GM12878 (cell line): ENCODE measurements at regions of chr2 and their contacts with region 1.

Region 1: DNA sequence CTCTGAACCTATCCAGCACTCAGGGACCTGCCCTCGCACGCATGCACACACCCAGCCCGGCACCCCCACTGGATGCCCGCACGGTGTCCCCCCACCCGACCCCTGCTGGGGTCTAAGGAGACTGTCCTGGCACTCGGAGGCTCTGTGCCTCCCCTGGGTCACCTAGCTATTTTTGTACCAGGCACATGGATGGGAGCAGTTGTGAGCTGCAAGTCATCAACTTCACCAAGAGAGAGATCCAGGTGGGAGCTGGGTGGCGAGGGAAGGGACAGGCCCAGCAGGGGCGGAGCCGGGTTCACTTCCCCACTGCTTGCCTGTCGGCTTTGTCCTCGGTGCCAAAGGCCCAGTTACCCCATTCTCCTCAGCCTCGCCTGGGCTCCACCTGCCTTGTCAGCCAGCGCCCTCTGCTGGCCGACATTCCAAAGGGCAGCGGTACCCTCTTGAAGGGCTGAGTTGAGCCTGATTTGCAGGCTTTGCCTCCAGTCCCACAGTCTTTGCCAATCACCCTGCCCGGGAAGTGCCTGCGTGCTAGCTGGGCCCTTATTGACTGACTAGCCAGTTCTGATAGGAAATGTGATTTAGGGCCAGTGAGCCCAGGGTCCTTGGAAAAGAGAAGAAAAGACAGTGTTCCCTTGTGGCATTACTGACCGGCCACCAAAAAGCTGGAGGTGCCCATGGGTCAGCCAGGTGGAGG is 5.8 kb downstream of the NT5DC4 start:
- DNase-seq: peak; percentile 61
- ATAC-seq: peak; percentile 86
- H3K4me3 ChIP-seq: no peak overlapping the region
- H3K27ac ChIP-seq: peak overlapping the region; percentile 39; the same call in 1 of the 2 replicates
- H3K4me1 ChIP-seq: peaks cover 22% of the 10 kb centered on the region
- H3K27me3 ChIP-seq: no peaks in the 10 kb centered on the region
- CTCF ChIP-seq: peak; percentile 98 to 99 (median 99); a peak in 5 of 6 replicates
- EP300 ChIP-seq: no peak; a peak in 1 of 4 replicates
- POLR2A ChIP-seq: no peak
- RAD21 ChIP-seq: peak; percentile 100

Region 2: GRCh38 chr2:112597537-112598322 is 128.9 kb before region 1 on chr2:
- CTCF ChIA-PET with region 1: interaction called, 286 read pairs
- POLR2A ChIA-PET with region 1: interaction called, 3 read pairs
- RAD21 ChIA-PET with region 1: interaction called, 132 read pairs
- SMC1A ChIA-PET with region 1: interaction called, 122 read pairs
- in situ Hi-C with region 1: loop called (anchors 5 kb)
- intact Hi-C with region 1: loop called (anchors 1 kb)
- DNase-seq: no peak
- ATAC-seq: no peak
- H3K4me3 ChIP-seq: no peak overlapping the region
- H3K27ac ChIP-seq: no peak overlapping the region
- H3K4me1 ChIP-seq: no peaks in the 10 kb centered on the region; the same call in 1 of the 2 replicates
- H3K27me3 ChIP-seq: no peaks in the 10 kb centered on the region
- CTCF ChIP-seq: no peak
- EP300 ChIP-seq: no peak
- POLR2A ChIP-seq: no peak
- RAD21 ChIP-seq: no peak

Region 3: GRCh38 chr2:112645310-112646101 is 81.1 kb before region 1 on chr2 and contains the start of gene SLC20A1:
- CTCF ChIA-PET with region 1: interaction called, 70 read pairs
- POLR2A ChIA-PET with region 1: interaction called, 9 read pairs
- RAD21 ChIA-PET with region 1: interaction called, 117 read pairs
- SMC1A ChIA-PET with region 1: interaction called, 24 read pairs
- in situ Hi-C with region 1: no loop called
- intact Hi-C with region 1: loop called (anchors 1 kb)
- DNase-seq: peak; percentile 74
- ATAC-seq: peak; percentile 94
- H3K4me3 ChIP-seq: peak within 1 kb of the TSS; percentile 89
- H3K27ac ChIP-seq: peak within 1 kb of the TSS; percentile 87
- H3K4me1 ChIP-seq: peaks cover 6% of the 10 kb centered on the region
- H3K27me3 ChIP-seq: peaks cover 0 to 2% of the 10 kb centered on the region in 2 experiments; a peak in 1 of 4 replicates
- CTCF ChIP-seq: peak; percentile 42 to 62 (median 52)
- EP300 ChIP-seq: 0 out of 4 replicates have a peak, but pooled peaks of 1 of the 2 experiments have one; percentile 32
- POLR2A ChIP-seq: peak; percentile 99
- RAD21 ChIP-seq: peak; percentile 54
- polyA plus RNA-seq, gene SLC20A1: 21.2 to 22.6 TPM

Region 4: DNA sequence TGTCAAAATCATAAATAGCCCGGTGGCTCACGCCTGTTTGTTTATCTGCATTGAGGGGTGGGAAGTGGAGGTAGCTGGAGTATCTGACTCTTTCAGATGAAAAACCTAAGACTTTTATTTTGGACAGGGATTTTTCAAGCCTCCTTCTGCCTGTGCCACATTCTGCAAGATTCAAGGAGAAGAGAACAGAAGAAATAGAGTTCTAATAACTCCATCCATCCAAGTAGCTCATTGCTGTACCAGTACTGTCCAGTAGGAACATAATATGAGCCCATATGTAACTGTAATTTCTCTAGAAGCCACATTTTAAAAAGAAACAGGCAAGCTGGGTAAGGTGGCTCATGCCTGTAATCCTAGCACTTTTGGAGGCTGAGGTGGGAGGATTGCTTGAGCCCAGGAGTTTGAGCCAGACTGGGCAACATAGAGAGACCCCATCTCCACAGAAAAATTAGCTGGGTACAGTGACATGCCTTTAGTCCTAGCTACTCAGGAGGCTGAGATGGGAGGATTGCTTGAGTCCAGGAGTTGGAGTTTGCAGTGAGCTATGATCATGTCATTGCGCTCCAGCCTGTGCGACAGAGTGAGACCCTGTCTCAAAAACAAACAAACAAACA is 41.3 kb before region 1 on chr2:
- CTCF ChIA-PET with region 1: interaction called, 209 read pairs
- POLR2A ChIA-PET with region 1: interaction called, 40 read pairs
- RAD21 ChIA-PET with region 1: interaction called, 140 read pairs
- SMC1A ChIA-PET with region 1: interaction called, 84 read pairs
- in situ Hi-C with region 1: no loop called
- intact Hi-C with region 1: no loop called
- DNase-seq: no peak
- ATAC-seq: peak; percentile 73
- H3K4me3 ChIP-seq: no peak overlapping the region
- H3K27ac ChIP-seq: no peak overlapping the region
- H3K4me1 ChIP-seq: peaks cover 13% of the 10 kb centered on the region
- H3K27me3 ChIP-seq: no peaks in the 10 kb centered on the region
- CTCF ChIP-seq: peak in 2 of 3 experiments; percentile 4 to 11; a peak in 1 of 6 replicates
- EP300 ChIP-seq: no peak
- POLR2A ChIP-seq: no peak
- RAD21 ChIP-seq: no peak

Region 5: DNA sequence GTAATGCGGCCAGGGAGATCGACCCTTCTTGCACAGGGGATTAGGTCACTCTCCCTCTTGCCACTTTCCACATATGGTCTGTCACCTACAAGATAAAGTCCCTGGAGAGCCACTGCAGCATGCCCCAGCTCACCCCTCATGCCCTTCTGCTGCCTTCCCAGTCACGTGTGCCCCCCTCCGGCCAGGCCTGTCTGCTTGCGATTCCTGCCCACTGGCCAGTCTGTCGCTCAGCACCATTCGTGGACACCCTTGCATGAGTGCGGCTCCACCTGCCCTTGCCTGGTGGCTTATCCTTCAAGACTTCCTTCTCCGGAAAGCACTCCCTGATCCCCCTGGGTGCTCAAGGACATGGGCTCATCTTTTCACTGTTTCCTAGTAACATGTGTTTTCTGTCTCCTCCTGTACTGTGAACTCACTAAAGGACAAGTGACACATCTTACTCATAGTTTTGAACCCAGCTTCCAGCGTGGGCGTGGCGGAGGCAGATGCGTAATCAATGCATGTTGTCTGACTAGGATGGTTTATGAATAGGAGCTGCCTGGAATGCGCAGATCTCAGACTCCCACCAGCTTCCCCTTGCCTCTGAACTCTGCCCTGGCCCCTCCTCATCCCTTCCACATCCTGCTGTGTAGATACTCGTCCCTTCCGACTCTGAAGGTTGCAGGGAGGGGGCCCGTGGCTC is 13.6 kb before region 1 on chr2:
- CTCF ChIA-PET with region 1: interaction called, 102 read pairs
- POLR2A ChIA-PET with region 1: interaction called, 51 read pairs
- RAD21 ChIA-PET with region 1: interaction called, 143 read pairs
- SMC1A ChIA-PET with region 1: interaction called, 107 read pairs
- in situ Hi-C with region 1: no loop called
- intact Hi-C with region 1: no loop called
- DNase-seq: no peak
- ATAC-seq: no peak
- H3K4me3 ChIP-seq: no peak overlapping the region
- H3K27ac ChIP-seq: no peak overlapping the region
- H3K4me1 ChIP-seq: peaks cover 20% of the 10 kb centered on the region
- H3K27me3 ChIP-seq: no peaks in the 10 kb centered on the region
- CTCF ChIP-seq: no peak
- EP300 ChIP-seq: no peak
- POLR2A ChIP-seq: no peak
- RAD21 ChIP-seq: no peak

Region 6: DNA sequence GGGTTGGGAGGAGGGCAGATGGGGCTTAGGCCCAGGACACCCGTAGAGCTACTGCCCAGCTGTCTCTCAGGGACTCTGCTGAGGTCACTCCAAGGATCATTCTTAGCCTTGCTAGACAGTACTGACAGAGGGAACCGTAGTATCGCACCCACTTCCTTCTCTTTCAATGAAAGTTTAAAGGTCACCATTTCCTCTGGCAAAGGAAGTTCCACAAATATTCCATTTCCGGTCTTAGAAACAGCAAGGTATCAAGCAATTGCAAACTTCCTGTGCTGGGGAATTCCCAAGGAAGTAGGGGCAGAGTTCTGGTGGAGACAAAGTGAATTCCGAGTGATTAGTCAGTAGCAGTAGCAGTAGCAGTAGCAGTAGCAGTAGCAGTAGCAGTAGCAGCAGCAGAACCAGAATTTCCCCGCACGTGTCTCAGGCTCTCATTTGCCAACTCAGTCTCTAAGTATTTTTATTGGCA is 85.2 kb after region 1 on chr2:
- CTCF ChIA-PET with region 1: no interaction called
- POLR2A ChIA-PET with region 1: no interaction called
- RAD21 ChIA-PET with region 1: no interaction called
- SMC1A ChIA-PET with region 1: no interaction called
- in situ Hi-C with region 1: no loop called
- intact Hi-C with region 1: no loop called
- DNase-seq: no peak
- ATAC-seq: peak; percentile 76
- H3K4me3 ChIP-seq: no peak overlapping the region
- H3K27ac ChIP-seq: peak overlapping the region; percentile 55
- H3K4me1 ChIP-seq: peaks cover 15% of the 10 kb centered on the region
- H3K27me3 ChIP-seq: no peaks in the 10 kb centered on the region
- CTCF ChIP-seq: no peak
- EP300 ChIP-seq: no peak
- POLR2A ChIP-seq: no peak
- RAD21 ChIP-seq: 0 out of 2 replicates have a peak, but pooled peaks have one; percentile 8

Region 7: DNA sequence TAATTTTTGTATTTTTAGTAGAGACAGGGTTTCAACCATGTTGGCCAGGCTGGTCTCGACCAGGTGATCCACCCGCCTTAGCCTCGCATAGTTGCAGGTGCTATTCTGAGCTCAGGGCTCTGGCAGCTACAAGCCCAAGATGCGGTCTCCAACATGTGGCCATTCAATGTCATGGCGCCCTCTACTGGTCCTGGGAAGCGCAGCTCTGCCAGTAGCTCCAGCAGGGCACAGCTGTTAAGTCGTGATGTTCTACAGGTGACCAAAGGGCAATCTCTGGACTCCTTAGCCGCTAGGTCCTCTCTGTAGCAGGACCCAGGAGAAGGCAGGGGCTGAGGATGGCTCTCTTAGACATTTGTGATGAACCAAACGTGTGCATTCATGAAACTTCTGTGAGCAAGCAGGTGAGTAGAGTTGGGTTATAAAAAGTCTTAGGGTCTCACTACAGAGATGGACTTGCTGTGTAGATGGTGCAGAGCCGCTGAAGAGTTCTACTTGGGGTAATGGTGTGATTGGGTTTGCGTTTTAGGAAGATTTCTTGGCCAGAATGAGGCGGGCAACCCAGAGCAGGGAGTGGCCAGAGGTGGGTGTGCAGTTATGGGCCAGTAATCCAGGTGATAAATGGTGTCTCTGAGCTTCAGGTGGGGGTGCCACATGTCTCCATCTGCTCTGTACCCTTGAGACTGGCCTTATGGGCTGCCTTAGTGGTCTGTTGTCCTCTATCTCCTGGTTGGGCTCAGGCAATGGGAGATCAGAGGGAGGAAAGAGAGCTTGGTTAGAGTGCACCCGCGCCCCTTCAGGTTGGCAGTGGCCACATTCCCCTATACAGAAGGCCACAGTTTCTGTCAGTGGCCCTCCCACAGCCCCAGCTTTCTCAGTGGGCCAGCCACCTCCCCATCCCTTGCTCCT is 215.4 kb after region 1 on chr2:
- CTCF ChIA-PET with region 1: interaction called, 106 read pairs
- POLR2A ChIA-PET with region 1: no interaction called
- RAD21 ChIA-PET with region 1: interaction called, 117 read pairs
- SMC1A ChIA-PET with region 1: interaction called, 17 read pairs
- in situ Hi-C with region 1: no loop called
- intact Hi-C with region 1: no loop called
- DNase-seq: peak; percentile 19
- ATAC-seq: peak; percentile 100
- H3K4me3 ChIP-seq: no peak overlapping the region
- H3K27ac ChIP-seq: no peak overlapping the region
- H3K4me1 ChIP-seq: no peaks in the 10 kb centered on the region
- H3K27me3 ChIP-seq: 0 out of 4 replicates have a peak, but pooled peaks cover 0 to 6% of the 10 kb centered on the region in 2 experiments
- CTCF ChIP-seq: peak; percentile 93 to 96 (median 95)
- EP300 ChIP-seq: no peak
- POLR2A ChIP-seq: no peak
- RAD21 ChIP-seq: peak; percentile 96